ENCODE measurements at regions of chr10 and their contacts with region 1.

Region 1: GRCh38 chr10:71390461-71390835 is 6.3 kb upstream of the CDH23 start:
- DNase-seq: no peak
- ATAC-seq: no peak
- H3K4me3 ChIP-seq: no peak overlapping the region
- H3K27ac ChIP-seq: no peak overlapping the region
- H3K4me1 ChIP-seq: peaks cover 0 to 5% (median 0%) of the 10 kb centered on the region in 9 donors
- H3K27me3 ChIP-seq: peaks cover 0 to 21% (median 0%) of the 10 kb centered on the region in 7 donors
- CTCF ChIP-seq: no peak

Region 2: GRCh38 chr10:71333129-71333887 is 57.1 kb before region 1 on chr10:
- intact Hi-C with region 1: no loop called
- DNase-seq: no peak
- ATAC-seq: peak in 7 of 8 donors; percentile 14 to 55 (median 35)
- H3K4me3 ChIP-seq: no peak overlapping the region
- H3K27ac ChIP-seq: peak overlapping the region in 1 of 10 donors; percentile 67
- H3K4me1 ChIP-seq: peaks cover 0 to 13% (median 0%) of the 10 kb centered on the region in 9 donors
- H3K27me3 ChIP-seq: no peaks in the 10 kb centered on the region
- CTCF ChIP-seq: no peak

Region 3: DNA sequence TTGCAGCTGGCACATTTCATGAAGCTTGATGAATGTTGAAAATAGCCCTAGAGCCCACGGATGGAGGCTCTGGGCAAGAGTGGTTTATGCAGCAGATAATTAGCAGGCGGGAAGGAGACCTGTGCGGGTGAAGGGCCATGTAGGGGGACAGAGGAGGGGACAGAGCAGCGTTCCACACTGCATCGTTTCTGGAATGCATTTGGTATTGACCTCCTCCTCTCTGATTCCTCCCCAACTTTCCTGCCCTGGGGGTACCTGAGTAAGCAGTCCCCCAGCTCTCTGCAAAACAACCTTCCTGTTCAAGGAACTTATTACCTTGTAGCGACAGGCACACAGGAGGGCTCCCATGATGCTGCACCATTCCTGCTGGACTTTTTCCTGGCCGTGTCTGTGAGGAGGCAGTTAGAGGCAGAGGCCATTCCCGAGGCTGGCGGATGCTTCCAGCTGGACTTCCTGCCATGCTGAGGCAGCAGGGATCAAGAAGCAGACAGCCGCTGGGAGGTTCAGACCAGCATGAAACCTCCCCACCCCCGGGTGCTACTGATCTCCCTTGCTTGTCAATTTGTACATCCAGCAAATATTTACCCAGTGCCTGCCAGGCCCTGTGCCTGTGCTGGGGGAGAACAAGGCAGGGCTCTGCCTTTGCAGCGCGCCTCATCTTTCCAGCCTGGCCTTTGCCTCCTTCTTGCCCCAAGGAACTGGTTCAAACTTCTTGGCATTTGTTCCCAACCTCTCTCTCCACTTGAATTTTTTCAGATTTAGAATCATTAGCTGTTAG is 42.7 kb before region 1 on chr10:
- intact Hi-C with region 1: loop called in 1 of 10 experiments (anchors 2 kb)
- DNase-seq: no peak
- ATAC-seq: no peak
- H3K4me3 ChIP-seq: no peak overlapping the region
- H3K27ac ChIP-seq: no peak overlapping the region
- H3K4me1 ChIP-seq: peaks cover 0 to 24% (median 0%) of the 10 kb centered on the region in 9 donors
- H3K27me3 ChIP-seq: no peaks in the 10 kb centered on the region
- CTCF ChIP-seq: no peak

Region 4: GRCh38 chr10:71494980-71495381 is 104.5 kb after region 1 on chr10:
- intact Hi-C with region 1: no loop called
- DNase-seq: no peak
- ATAC-seq: no peak
- H3K4me3 ChIP-seq: no peak overlapping the region
- H3K27ac ChIP-seq: no peak overlapping the region
- H3K4me1 ChIP-seq: peaks cover 0 to 7% (median 0%) of the 10 kb centered on the region in 9 donors
- H3K27me3 ChIP-seq: no peaks in the 10 kb centered on the region
- CTCF ChIP-seq: no peak

Region 5: GRCh38 chr10:71708301-71708703 is 317.9 kb after region 1 on chr10:
- intact Hi-C with region 1: loop called in 5 of 10 experiments (anchors 5 to 10 kb)
- DNase-seq: peak; percentile 50 to 71
- ATAC-seq: peak; percentile 32 to 57 (median 42)
- H3K4me3 ChIP-seq: no peak overlapping the region
- H3K27ac ChIP-seq: no peak overlapping the region
- H3K4me1 ChIP-seq: peaks cover 3 to 33% (median 28%) of the 10 kb centered on the region in 9 donors
- H3K27me3 ChIP-seq: no peaks in the 10 kb centered on the region
- CTCF ChIP-seq: peak; percentile 64 to 96 (median 90)